Transverse colon (tissue), 4 donors: ENCODE measurements at regions of chr6 and their contacts with region 1.

Region 1: DNA sequence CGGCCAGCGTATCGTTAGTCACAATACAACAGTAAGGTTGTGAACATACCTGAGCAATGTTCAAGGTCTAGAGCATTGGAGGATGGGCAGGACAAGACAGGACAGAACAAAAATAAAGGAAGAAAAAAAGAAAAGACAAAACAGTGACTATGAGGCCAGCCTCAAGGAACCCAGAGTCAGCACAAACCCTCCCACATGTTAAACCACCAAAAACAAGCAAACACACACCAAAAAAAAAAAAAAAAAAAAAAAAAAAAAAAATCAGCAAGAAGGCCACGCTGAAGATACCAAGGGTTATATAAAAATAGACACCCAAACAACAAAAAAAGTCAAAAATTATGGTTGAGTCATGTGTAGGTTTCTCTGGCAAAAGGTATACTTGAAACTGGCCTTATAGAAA is 12.8 kb downstream of the MED23 start:
- DNase-seq: no peak
- H3K4me3 ChIP-seq: no peak overlapping the region
- H3K27ac ChIP-seq: no peak overlapping the region
- H3K4me1 ChIP-seq: no peaks in the 10 kb centered on the region
- H3K27me3 ChIP-seq: no peaks in the 10 kb centered on the region
- CTCF ChIP-seq: no peak
- EP300 ChIP-seq: no peak
- POLR2A ChIP-seq: no peak

Region 2: GRCh38 chr6:130041594-130041993 is 1573.7 kb before region 1 on chr6:
- in situ Hi-C with region 1: no loop called
- intact Hi-C with region 1: loop called (anchors 5 kb)
- DNase-seq: no peak
- H3K4me3 ChIP-seq: no peak overlapping the region
- H3K27ac ChIP-seq: no peak overlapping the region
- H3K4me1 ChIP-seq: no peaks in the 10 kb centered on the region
- H3K27me3 ChIP-seq: no peaks in the 10 kb centered on the region
- CTCF ChIP-seq: no peak
- EP300 ChIP-seq: no peak
- POLR2A ChIP-seq: no peak

Region 3: DNA sequence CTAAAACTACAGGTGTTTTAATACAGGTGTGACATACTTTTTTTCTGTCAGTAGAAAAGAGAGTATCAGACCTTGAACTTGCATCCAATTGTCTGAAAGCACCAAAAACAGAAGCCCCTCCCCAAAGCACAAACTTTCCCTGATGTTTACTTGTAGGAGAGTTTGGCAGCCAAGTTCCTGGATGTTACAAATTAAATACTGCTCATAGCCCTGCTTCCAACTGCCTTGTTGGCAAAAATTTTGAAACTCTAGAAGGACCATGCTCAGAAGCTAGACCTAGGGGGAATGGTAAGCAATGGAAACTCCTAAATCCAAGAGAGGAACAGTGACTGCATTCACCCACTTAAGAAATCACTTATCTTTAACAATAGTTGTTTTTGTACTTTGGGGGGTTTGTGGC is 59.3 kb before region 1 on chr6:
- in situ Hi-C with region 1: no loop called
- intact Hi-C with region 1: no loop called
- DNase-seq: no peak
- H3K4me3 ChIP-seq: no peak overlapping the region
- H3K27ac ChIP-seq: no peak overlapping the region
- H3K4me1 ChIP-seq: no peaks in the 10 kb centered on the region
- H3K27me3 ChIP-seq: no peaks in the 10 kb centered on the region
- CTCF ChIP-seq: no peak
- EP300 ChIP-seq: no peak
- POLR2A ChIP-seq: no peak